ENCODE measurements at regions of chr6 and their contacts with region 1.

Region 1: GRCh38 chr6:111709615-111710398 is 104.1 kb upstream of the TRAF3IP2 start:
- DNase-seq: peak; percentile 72 to 84 (median 79)
- H3K4me3 ChIP-seq: peak overlapping the region in 4 of 7 experiments; percentile 13 to 59 (median 35)
- H3K27ac ChIP-seq: no peak overlapping the region
- H3K4me1 ChIP-seq: peaks cover 0 to 3% (median 2%) of the 10 kb centered on the region in 4 experiments
- H3K27me3 ChIP-seq: no peaks in the 10 kb centered on the region

Region 2: GRCh38 chr6:111721753-111722154 is 11.9 kb after region 1 on chr6:
- CTCF ChIA-PET with region 1: interaction called, 12 read pairs
- POLR2A ChIA-PET with region 1: no interaction called
- DNase-seq: peak; percentile 50 to 78 (median 71)
- H3K4me3 ChIP-seq: no peak overlapping the region
- H3K27ac ChIP-seq: no peak overlapping the region
- H3K4me1 ChIP-seq: peaks cover 0 to 11% (median 8%) of the 10 kb centered on the region in 4 experiments
- H3K27me3 ChIP-seq: no peaks in the 10 kb centered on the region

Region 3: GRCh38 chr6:111774346-111774703 is 64.5 kb after region 1 on chr6:
- CTCF ChIA-PET with region 1: no interaction called
- POLR2A ChIA-PET with region 1: no interaction called
- DNase-seq: no peak
- H3K4me3 ChIP-seq: no peak overlapping the region
- H3K27ac ChIP-seq: no peak overlapping the region
- H3K4me1 ChIP-seq: no peaks in the 10 kb centered on the region
- H3K27me3 ChIP-seq: no peaks in the 10 kb centered on the region

Region 4: GRCh38 chr6:111997078-111997852 is 287.5 kb after region 1 on chr6:
- CTCF ChIA-PET with region 1: interaction called, 22 read pairs
- POLR2A ChIA-PET with region 1: no interaction called
- DNase-seq: peak; percentile 75 to 80 (median 78)
- H3K4me3 ChIP-seq: peak overlapping the region in 2 of 7 experiments; percentile 32 to 54
- H3K27ac ChIP-seq: no peak overlapping the region
- H3K4me1 ChIP-seq: peaks cover 0 to 11% (median 6%) of the 10 kb centered on the region in 4 experiments
- H3K27me3 ChIP-seq: peaks cover 0 to 3% (median 0%) of the 10 kb centered on the region in 5 experiments

Region 5: GRCh38 chr6:112029045-112029822 is 319.4 kb after region 1 on chr6:
- CTCF ChIA-PET with region 1: interaction called, 19 read pairs
- POLR2A ChIA-PET with region 1: no interaction called
- DNase-seq: peak; percentile 73 to 85 (median 81)
- H3K4me3 ChIP-seq: no peak overlapping the region
- H3K27ac ChIP-seq: no peak overlapping the region
- H3K4me1 ChIP-seq: peaks cover 7 to 18% (median 8%) of the 10 kb centered on the region in 4 experiments
- H3K27me3 ChIP-seq: no peaks in the 10 kb centered on the region

Region 6: GRCh38 chr6:112049026-112049799 is 339.4 kb after region 1 on chr6:
- CTCF ChIA-PET with region 1: interaction called, 107 read pairs
- POLR2A ChIA-PET with region 1: no interaction called
- DNase-seq: no peak
- H3K4me3 ChIP-seq: no peak overlapping the region
- H3K27ac ChIP-seq: no peak overlapping the region
- H3K4me1 ChIP-seq: no peaks in the 10 kb centered on the region
- H3K27me3 ChIP-seq: no peaks in the 10 kb centered on the region